ENCODE measurements at regions of chr20 and their contacts with region 1.

Region 1: GRCh38 chr20:50460460-50461267 is 49.5 kb upstream of the PTPN1 start:
- DNase-seq: peak; percentile 69
- ATAC-seq: peak; percentile 86
- H3K4me3 Mint-ChIP-seq: no peak overlapping the region
- H3K27ac Mint-ChIP-seq: no peak overlapping the region
- H3K4me1 Mint-ChIP-seq: peaks cover 5% of the 10 kb centered on the region
- H3K27me3 Mint-ChIP-seq: peaks cover 24% of the 10 kb centered on the region
- CTCF ChIP-seq: peak; percentile 42

Region 2: GRCh38 chr20:50491926-50492634 is 31.4 kb after region 1 on chr20:
- CTCF ChIA-PET with region 1: interaction called, 10 read pairs
- POLR2A ChIA-PET with region 1: no interaction called
- intact Hi-C with region 1: no loop called
- DNase-seq: no peak
- ATAC-seq: no peak
- H3K4me3 Mint-ChIP-seq: no peak overlapping the region
- H3K27ac Mint-ChIP-seq: no peak overlapping the region
- H3K4me1 Mint-ChIP-seq: peaks cover 43% of the 10 kb centered on the region
- H3K27me3 Mint-ChIP-seq: no peaks in the 10 kb centered on the region
- CTCF ChIP-seq: no peak

Region 3: GRCh38 chr20:50575847-50576720 is 115.4 kb after region 1 on chr20:
- CTCF ChIA-PET with region 1: interaction called, 17 read pairs
- POLR2A ChIA-PET with region 1: no interaction called
- intact Hi-C with region 1: no loop called
- DNase-seq: peak; percentile 52
- ATAC-seq: peak; percentile 84
- H3K4me3 Mint-ChIP-seq: no peak overlapping the region
- H3K27ac Mint-ChIP-seq: peak overlapping the region; percentile 77
- H3K4me1 Mint-ChIP-seq: peaks cover 55% of the 10 kb centered on the region
- H3K27me3 Mint-ChIP-seq: no peaks in the 10 kb centered on the region
- CTCF ChIP-seq: peak; percentile 48

Region 4: GRCh38 chr20:50635667-50636503 is 175.2 kb after region 1 on chr20:
- CTCF ChIA-PET with region 1: no interaction called
- POLR2A ChIA-PET with region 1: no interaction called
- intact Hi-C with region 1: loop called (anchors 5 kb)
- DNase-seq: peak; percentile 56
- ATAC-seq: peak; percentile 76
- H3K4me3 Mint-ChIP-seq: no peak overlapping the region
- H3K27ac Mint-ChIP-seq: no peak overlapping the region
- H3K4me1 Mint-ChIP-seq: no peaks in the 10 kb centered on the region
- H3K27me3 Mint-ChIP-seq: no peaks in the 10 kb centered on the region
- CTCF ChIP-seq: peak; percentile 22

Region 5: GRCh38 chr20:50746138-50746940 is 285.7 kb after region 1 on chr20:
- CTCF ChIA-PET with region 1: no interaction called
- POLR2A ChIA-PET with region 1: no interaction called
- intact Hi-C with region 1: loop called (anchors 5 kb)
- DNase-seq: no peak
- ATAC-seq: no peak
- H3K4me3 Mint-ChIP-seq: no peak overlapping the region
- H3K27ac Mint-ChIP-seq: no peak overlapping the region
- H3K4me1 Mint-ChIP-seq: peaks cover 8% of the 10 kb centered on the region
- H3K27me3 Mint-ChIP-seq: no peaks in the 10 kb centered on the region
- CTCF ChIP-seq: no peak

Measured in activated B cell treated with CpG ODN at 0.5 μM for 24 hours (primary cell).